Calu3 (cell line): ENCODE measurements at regions of chr4 and their contacts with region 1.

Region 1: DNA sequence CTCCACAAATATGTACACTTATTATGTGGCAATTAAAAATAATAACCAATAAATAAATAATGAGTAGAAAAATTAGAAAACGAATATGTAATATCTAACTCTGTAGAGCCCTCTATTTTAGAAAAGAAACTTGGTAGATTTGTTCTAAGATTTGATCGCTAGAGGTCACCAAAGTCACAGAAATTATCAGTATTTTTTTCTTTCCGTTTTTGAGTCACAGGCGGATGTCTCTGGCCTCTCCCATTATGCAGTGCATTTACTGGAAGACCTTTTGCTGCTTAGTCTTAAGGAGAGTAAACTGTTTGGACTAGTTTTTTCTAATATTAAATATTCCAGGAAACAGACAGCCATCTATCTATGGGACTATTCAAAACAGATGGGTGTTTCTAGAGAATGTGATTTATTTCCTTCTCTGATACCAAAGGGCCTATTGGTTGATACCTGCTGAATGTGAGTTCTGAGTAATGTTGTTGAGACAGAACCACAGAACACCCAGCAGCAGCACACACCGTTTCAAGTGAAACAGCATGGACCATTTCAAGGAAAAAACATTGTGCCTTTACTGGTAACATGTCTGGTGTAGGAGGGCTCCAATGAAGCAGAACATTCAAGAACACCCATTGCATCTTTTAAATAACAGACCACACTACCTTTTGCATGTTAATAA is 34.0 kb upstream of the GYPA start:
- DNase-seq: peak; percentile 8
- H3K4me3 Mint-ChIP-seq: no peak overlapping the region
- H3K27ac Mint-ChIP-seq: no peak overlapping the region
- H3K4me1 Mint-ChIP-seq: peaks cover 7% of the 10 kb centered on the region
- H3K27me3 Mint-ChIP-seq: peaks cover 9% of the 10 kb centered on the region
- CTCF ChIP-seq: no peak

Region 2: DNA sequence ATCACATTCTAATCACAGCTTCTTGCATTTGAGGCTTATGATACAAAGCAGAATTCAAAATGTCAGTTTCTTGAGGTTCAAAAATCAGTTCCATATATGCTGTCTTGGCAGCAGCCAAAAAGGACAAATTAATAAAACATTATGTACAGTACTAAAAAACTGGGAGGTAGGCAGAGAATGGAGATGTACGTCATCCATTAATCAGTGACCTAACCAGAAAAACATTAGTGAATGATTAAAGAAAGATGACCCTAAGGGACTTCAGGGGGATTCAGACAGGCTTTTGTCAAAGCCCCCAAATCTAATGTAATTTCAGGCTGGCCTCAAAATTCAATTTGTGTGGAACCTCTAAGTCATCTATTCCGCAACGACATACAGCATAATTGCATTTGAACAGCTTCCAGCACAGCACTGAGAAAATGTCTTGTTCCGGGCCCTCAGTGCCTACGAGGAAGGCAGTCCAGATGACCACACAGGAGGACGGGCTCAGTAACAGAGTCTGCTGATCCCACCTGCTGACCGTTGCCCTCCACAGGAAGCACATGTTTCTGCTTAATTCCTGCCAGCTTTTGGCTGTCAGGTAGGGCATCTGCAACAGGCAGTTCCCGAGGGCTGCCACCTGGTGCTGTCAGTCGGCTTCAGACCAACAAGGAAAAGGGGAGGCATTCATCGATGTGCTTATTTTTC is 387.6 kb after region 1 on chr4:
- CTCF ChIA-PET with region 1: no interaction called
- intact Hi-C with region 1: loop called (anchors 10 kb)
- DNase-seq: peak; percentile 53
- H3K4me3 Mint-ChIP-seq: peak overlapping the region; percentile 34
- H3K27ac Mint-ChIP-seq: peak overlapping the region; percentile 52
- H3K4me1 Mint-ChIP-seq: peaks cover 8% of the 10 kb centered on the region
- H3K27me3 Mint-ChIP-seq: no peaks in the 10 kb centered on the region
- CTCF ChIP-seq: peak; percentile 13

Region 3: DNA sequence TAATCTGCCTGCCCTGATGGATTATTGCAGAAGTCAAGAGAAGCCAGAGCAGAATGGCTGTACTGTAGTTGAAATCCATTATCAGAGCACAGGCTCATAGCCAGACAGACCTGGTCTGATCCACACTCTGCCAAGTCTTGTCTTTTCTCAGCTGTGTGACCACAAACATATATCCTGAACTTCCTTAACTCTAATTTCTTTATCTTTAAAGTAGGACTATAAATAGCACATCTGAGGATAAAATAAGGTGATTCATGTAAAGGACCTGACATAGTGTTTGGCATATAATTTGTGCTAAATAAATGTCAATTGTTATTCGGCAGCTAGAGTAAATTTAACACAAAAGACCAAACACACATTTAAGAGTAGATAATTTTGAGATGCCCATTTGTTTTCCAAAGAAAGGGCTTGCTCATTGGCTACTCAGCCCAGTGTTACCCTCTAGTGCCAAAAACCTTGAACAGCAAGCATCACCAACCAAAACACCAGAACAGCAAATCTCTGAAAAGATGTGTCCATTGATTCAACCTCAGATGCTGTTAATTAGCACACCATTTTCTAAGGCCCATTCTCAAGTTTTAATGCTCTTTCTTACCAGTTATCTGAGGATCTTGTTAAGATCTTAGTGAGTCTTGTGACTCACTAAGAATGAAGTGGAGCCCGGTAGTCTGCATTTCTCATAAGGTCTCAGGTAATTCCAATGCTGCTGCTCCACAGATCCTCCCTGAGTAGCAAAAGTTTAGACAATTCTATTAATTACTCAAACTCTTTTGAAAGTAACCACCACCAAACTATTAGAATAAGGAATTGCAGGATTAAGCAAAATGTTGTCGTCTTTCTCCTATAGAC is 580.3 kb after region 1 on chr4:
- CTCF ChIA-PET with region 1: no interaction called
- intact Hi-C with region 1: loop called (anchors 5 kb)
- DNase-seq: peak; percentile 20
- H3K4me3 Mint-ChIP-seq: no peak overlapping the region
- H3K27ac Mint-ChIP-seq: no peak overlapping the region
- H3K4me1 Mint-ChIP-seq: no peaks in the 10 kb centered on the region
- H3K27me3 Mint-ChIP-seq: no peaks in the 10 kb centered on the region
- CTCF ChIP-seq: no peak

Region 4: GRCh38 chr4:144787365-144788258 is 613.1 kb after region 1 on chr4:
- CTCF ChIA-PET with region 1: no interaction called
- intact Hi-C with region 1: loop called (anchors 10 kb)
- DNase-seq: no peak
- H3K4me3 Mint-ChIP-seq: no peak overlapping the region
- H3K27ac Mint-ChIP-seq: peak overlapping the region; percentile 36
- H3K4me1 Mint-ChIP-seq: no peaks in the 10 kb centered on the region
- H3K27me3 Mint-ChIP-seq: no peaks in the 10 kb centered on the region
- CTCF ChIP-seq: no peak

Region 5: GRCh38 chr4:145061318-145061920 is 886.9 kb after region 1 on chr4:
- CTCF ChIA-PET with region 1: interaction called, 3 read pairs
- intact Hi-C with region 1: loop called (anchors 2 kb)
- DNase-seq: no peak
- H3K4me3 Mint-ChIP-seq: no peak overlapping the region
- H3K27ac Mint-ChIP-seq: no peak overlapping the region
- H3K4me1 Mint-ChIP-seq: no peaks in the 10 kb centered on the region
- H3K27me3 Mint-ChIP-seq: no peaks in the 10 kb centered on the region
- CTCF ChIP-seq: no peak